Activated naive CD4-positive, alpha-beta T cell treated with anti-CD3 and anti-CD28 coated beads for 36 hours (primary cell): ENCODE measurements at regions of chr22 and their contacts with region 1.

Region 1: DNA sequence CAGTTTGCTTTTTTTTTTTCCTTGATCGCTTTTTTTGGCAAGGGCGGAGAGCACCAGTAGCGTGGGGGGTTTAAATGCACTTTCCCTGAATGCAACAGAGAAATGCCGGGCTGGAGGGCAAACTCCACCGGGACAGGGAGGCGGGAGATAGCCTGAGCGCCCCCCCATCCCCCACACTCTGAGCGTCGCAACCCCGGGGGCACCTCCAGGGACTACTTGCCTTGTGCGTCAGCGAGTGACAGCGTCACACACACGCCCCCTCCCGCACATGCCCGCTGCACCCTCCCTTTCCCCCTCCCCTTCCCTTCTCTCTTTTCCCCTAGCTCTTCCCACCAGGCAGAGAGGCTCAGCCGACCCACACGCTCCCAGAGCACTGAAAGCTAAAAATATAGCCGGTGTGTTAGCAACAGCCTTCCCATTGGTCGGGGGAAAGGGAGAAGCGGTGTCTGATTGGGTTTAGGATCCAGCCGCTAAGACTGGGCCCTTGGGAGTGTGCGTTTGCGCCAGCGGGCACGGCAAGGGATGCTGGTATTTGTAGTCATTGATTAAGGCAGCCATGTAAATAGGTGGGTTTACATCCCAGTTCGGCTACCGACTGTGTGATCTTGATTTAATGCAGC is 1.7 kb upstream of the TOB2 start:
- DNase-seq: peak; percentile 96
- H3K4me3 Mint-ChIP-seq: peak overlapping the region; percentile 87
- H3K27ac Mint-ChIP-seq: peak overlapping the region; percentile 94
- H3K4me1 Mint-ChIP-seq: peaks cover 9% of the 10 kb centered on the region
- H3K27me3 Mint-ChIP-seq: no peaks in the 10 kb centered on the region

Region 2: GRCh38 chr22:41091132-41092022 is 356.9 kb before region 1 on chr22:
- CTCF ChIA-PET with region 1: no interaction called
- intact Hi-C with region 1: loop called (anchors 1 kb)
- DNase-seq: peak; percentile 99
- H3K4me3 Mint-ChIP-seq: peak overlapping the region; percentile 93
- H3K27ac Mint-ChIP-seq: peak overlapping the region; percentile 99
- H3K4me1 Mint-ChIP-seq: peaks cover 25% of the 10 kb centered on the region
- H3K27me3 Mint-ChIP-seq: no peaks in the 10 kb centered on the region

Region 3: DNA sequence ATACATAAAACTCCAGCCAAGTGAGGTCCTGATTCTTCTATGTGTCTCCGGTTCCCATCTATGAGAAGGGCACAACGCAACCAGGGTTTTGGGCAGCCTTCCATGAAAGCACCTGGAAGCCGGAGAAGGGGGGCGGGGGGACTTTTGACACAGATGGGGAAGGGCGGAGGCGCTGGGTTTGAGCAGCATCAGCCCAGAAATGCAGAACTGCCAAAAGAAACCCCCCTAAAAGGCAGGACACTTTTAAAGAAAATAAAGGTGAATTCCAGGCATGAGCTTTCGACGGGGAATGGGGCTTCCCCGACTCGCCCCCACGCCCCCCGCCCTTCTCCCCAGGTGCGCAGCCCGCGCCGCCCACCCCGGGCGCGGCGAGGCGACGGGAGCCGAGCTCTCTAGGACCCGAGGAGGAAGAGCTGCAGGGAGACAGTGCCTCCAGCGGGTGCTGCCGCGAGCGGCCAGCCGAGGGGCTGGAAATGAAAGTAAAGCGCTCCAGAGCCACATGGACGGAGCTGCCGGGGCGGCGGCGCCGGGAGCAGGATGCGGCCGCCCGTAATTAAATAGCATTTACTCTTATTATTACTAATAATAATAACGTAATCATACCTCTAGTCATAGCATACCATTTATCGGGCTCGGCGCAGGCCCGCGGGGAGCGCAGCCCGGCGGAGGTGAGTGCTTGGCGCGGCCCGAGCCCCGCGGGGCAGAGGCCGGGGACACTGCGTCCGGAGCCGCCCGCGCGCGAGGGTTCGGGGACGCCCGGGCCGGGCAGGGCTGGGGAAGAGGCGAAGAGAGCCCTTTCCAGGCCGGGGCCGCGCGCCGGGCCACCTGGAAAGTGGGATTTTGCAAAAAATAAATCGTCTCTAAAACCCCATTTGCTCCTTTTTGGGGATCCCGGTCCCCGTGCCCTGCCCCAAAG is 146.9 kb before region 1 on chr22 and contains the start of gene ZC3H7B:
- CTCF ChIA-PET with region 1: no interaction called
- intact Hi-C with region 1: loop called (anchors 5 kb)
- DNase-seq: peak; percentile 88
- H3K4me3 Mint-ChIP-seq: peak within 1 kb of the TSS; percentile 74
- H3K27ac Mint-ChIP-seq: peak within 1 kb of the TSS; percentile 76
- H3K4me1 Mint-ChIP-seq: peaks cover 37% of the 10 kb centered on the region
- H3K27me3 Mint-ChIP-seq: no peaks in the 10 kb centered on the region
- total RNA-seq, gene ZC3H7B: 30.0 to 30.3 TPM

Region 4: GRCh38 chr22:41468381-41469217 is 20.3 kb after region 1 on chr22 and contains the starts of genes ACO2 and PHF5A:
- CTCF ChIA-PET with region 1: interaction called, 5 read pairs
- intact Hi-C with region 1: loop called (anchors 1 kb)
- DNase-seq: peak; percentile 99
- H3K4me3 Mint-ChIP-seq: peak within 1 kb of the TSS; percentile 75
- H3K27ac Mint-ChIP-seq: peak within 1 kb of the TSS; percentile 96
- H3K4me1 Mint-ChIP-seq: peaks cover 62% of the 10 kb centered on the region
- H3K27me3 Mint-ChIP-seq: no peaks in the 10 kb centered on the region
- total RNA-seq, gene ACO2: 113 to 118 TPM
- total RNA-seq, gene PHF5A: 67.5 to 69.0 TPM

Region 5: DNA sequence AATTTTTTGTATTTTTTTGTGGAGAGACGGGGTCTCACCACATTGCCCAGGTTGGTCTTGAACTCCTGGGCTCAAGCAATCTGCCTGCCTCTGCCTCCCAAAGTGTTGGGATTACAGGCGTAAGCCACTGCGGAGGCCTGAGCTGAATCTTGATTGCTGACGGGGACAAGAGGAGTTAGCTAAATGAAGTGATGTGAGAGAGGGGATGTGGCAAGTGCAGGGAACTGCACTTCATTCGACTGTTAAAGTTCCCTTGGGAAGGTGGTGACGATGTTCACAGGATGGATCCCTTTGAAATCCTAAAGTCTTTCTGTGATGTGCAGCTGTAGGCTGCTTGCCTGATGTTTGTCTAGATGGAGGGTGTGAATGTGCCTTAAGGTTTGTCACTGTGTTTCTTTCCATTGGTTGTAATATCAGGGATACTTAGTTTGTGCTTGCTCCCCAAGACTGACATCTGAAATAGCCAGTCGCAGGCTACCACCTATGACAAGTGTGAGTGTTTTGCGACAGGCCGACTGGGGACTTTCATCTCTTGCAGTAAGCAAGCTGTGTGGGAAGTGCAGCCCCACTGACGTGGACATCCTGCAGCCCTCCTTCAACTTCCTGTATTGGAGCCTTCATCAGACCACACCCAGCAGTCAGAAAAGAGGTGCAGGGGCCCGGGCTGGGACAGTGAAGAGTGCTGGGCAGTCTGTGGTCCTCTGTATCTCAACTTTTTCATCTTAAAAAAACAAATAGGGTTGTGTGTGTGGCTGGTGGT is 332.6 kb after region 1 on chr22:
- CTCF ChIA-PET with region 1: no interaction called
- intact Hi-C with region 1: loop called (anchors 10 kb)
- DNase-seq: peak; percentile 98
- H3K4me3 Mint-ChIP-seq: peak overlapping the region; percentile 86
- H3K27ac Mint-ChIP-seq: peak overlapping the region; percentile 95
- H3K4me1 Mint-ChIP-seq: peaks cover 49% of the 10 kb centered on the region
- H3K27me3 Mint-ChIP-seq: no peaks in the 10 kb centered on the region

Region 6: DNA sequence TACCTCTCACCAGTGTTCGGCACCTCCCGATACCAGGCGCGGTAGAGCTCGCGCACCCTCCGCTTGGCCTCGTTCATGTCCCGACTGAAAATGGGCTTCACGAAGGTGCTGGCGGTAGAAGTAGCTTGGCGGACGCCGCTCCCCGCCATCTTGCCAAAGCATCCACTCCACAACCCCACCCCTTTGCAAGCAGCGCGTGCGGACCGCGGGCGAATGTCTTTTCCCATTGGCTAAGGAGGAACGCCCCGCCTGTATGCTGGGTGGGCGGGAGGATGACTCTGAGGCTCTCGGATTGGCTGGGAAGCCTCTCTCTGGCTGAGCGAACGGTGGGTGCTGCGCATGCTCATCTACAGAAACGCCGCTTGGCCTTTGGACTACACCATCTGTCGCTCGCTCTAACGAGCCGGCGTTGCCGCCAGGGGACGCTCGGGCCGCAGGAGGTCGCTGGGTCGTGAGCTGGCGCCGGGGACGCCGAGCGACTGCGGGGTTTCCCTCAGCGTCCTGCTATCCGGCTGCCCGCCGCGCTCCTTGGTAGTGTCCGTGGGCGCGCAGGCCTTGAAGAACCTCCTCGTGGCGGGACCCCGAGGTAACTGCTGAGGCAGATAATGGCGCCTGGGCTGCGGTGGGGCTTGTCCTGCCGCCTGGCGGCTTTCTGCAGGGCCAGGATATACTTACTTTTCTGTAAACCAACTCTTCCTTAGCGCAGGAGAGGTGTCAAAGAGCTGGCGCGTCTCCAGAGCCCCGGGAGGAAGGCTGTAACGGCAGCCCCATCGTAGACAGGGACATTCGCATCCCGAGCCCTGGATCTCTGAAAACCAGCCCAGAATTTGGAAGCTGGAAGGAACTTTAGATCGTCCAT is 642.5 kb after region 1 on chr22 and contains the start of gene NDUFA6:
- CTCF ChIA-PET with region 1: no interaction called
- intact Hi-C with region 1: loop called (anchors 5 kb)
- DNase-seq: peak; percentile 99
- H3K4me3 Mint-ChIP-seq: peak within 1 kb of the TSS; percentile 98
- H3K27ac Mint-ChIP-seq: peak within 1 kb of the TSS; percentile 99
- H3K4me1 Mint-ChIP-seq: peaks cover 31% of the 10 kb centered on the region
- H3K27me3 Mint-ChIP-seq: no peaks in the 10 kb centered on the region
- total RNA-seq, gene NDUFA6: 122 to 126 TPM